ENCODE measurements at regions of chr18 and their contacts with region 1.

Region 1: DNA sequence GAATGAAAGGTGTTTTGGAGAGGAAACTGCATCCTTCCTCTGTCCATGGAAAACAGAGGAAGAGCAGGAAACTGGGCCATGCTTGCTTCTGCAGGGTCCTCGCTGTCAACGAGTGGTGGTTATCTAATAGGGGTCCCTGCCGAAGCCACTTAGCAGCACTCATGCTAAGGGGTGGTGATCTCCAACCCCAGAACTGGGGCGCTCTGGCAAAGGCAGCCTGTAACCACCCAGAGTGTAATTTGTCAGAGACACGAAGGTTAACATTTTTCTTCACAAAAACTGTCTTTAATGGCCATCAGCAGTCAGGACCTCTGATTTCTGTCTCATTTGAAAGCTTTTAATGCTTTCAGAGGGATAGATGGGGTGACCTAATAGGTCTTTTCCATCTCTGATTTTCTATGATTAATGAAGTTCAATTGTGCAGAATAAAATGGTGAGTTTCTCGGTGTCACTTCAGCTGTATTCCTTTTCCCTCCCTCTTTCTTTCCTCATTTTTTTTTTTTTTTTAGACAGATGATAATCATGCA is 231.3 kb upstream of the CELF4 start:
- DNase-seq: no peak
- ATAC-seq: no peak
- H3K4me3 ChIP-seq: no peak overlapping the region
- H3K27ac ChIP-seq: no peak overlapping the region
- H3K4me1 ChIP-seq: no peaks in the 10 kb centered on the region
- H3K27me3 ChIP-seq: no peaks in the 10 kb centered on the region
- CTCF ChIP-seq: no peak
- EP300 ChIP-seq: no peak
- POLR2A ChIP-seq: no peak
- RAD21 ChIP-seq: no peak

Region 2: GRCh38 chr18:37846996-37847395 is 50.1 kb after region 1 on chr18:
- CTCF ChIA-PET with region 1: no interaction called
- POLR2A ChIA-PET with region 1: no interaction called
- in situ Hi-C with region 1: loop called (anchors 5 kb)
- intact Hi-C with region 1: no loop called
- DNase-seq: no peak
- ATAC-seq: no peak
- H3K4me3 ChIP-seq: no peak overlapping the region
- H3K27ac ChIP-seq: no peak overlapping the region
- H3K4me1 ChIP-seq: no peaks in the 10 kb centered on the region
- H3K27me3 ChIP-seq: no peaks in the 10 kb centered on the region
- CTCF ChIP-seq: no peak
- EP300 ChIP-seq: no peak
- POLR2A ChIP-seq: no peak
- RAD21 ChIP-seq: no peak